ENCODE measurements at regions of chr17 and their contacts with region 1.

Region 1: GRCh38 chr17:49180303-49180702 is 30.1 kb downstream of the GNGT2 start:
- DNase-seq: peak; percentile 56 to 78 (median 74)
- H3K4me3 ChIP-seq: no peak overlapping the region
- H3K4me3 Mint-ChIP-seq: no peak overlapping the region
- H3K27ac ChIP-seq: no peak overlapping the region
- H3K27ac Mint-ChIP-seq: peak overlapping the region in 1 of 7 donors; percentile 66
- H3K4me1 ChIP-seq: peaks cover 0 to 3% of the 10 kb centered on the region in 2 donors
- H3K4me1 Mint-ChIP-seq: peaks cover 2% of the 10 kb centered on the region
- H3K27me3 ChIP-seq: no peaks in the 10 kb centered on the region
- H3K27me3 Mint-ChIP-seq: peaks cover 10 to 11% (median 10%) of the 10 kb centered on the region in 3 donors
- CTCF ChIP-seq: peak; percentile 91

Region 2: GRCh38 chr17:49117587-49118230 is 62.6 kb before region 1 on chr17:
- intact Hi-C with region 1: no loop called
- DNase-seq: no peak
- H3K4me3 ChIP-seq: no peak overlapping the region
- H3K4me3 Mint-ChIP-seq: no peak overlapping the region
- H3K27ac ChIP-seq: no peak overlapping the region
- H3K27ac Mint-ChIP-seq: no peak overlapping the region
- H3K4me1 ChIP-seq: no peaks in the 10 kb centered on the region
- H3K4me1 Mint-ChIP-seq: no peaks in the 10 kb centered on the region
- H3K27me3 ChIP-seq: peaks cover 24 to 26% of the 10 kb centered on the region in 2 donors
- H3K27me3 Mint-ChIP-seq: peaks cover 16 to 41% (median 21%) of the 10 kb centered on the region in 3 donors
- CTCF ChIP-seq: no peak

Region 3: DNA sequence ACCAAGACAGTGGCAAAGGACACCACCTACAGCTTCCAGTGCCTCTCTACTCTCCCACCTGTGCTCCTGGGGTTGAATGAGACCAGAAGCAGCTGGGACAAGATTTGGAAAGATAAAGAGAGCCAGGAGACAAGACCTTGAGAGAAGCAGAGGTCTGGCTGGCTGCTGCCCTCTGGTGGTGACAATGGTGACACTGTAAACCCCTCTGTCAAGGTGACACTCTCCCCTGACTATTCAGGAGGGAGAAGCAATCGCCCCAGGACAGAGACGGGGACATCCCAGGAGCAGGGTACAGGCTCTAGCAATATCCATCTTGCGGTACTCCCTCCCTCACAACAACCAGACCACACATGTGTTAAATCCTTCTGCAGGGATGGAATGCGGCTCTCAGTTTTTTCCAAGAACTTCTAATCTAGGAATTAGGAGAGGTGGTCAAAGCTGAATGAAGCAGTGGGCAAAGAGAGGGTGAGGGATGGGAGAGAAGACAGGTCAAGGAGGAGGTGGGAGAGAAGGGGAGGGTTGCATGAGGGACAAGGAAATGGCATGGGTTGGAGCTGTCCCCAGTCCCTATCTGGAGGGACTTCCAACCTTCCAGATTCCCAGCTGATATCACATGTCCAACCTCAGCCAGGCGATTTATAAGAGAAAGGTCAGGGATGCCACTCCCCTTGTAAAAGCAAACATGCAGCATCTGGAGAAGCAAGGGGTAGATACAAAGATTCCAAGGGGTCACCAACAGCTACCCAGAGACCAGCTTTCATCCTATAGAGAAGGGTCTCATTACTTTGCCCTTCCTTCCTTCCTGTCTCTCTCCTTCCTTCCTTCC is 47.3 kb after region 1 on chr17:
- intact Hi-C with region 1: loop called (anchors 1 to 2 kb)
- DNase-seq: peak; percentile 59 to 82 (median 74)
- H3K4me3 ChIP-seq: no peak overlapping the region
- H3K4me3 Mint-ChIP-seq: peak overlapping the region in 1 of 2 donors; percentile 60
- H3K27ac ChIP-seq: no peak overlapping the region
- H3K27ac Mint-ChIP-seq: peak overlapping the region in 2 of 7 donors; percentile 39 to 46
- H3K4me1 ChIP-seq: peaks cover 44 to 58% of the 10 kb centered on the region in 2 donors
- H3K4me1 Mint-ChIP-seq: peaks cover 55% of the 10 kb centered on the region
- H3K27me3 ChIP-seq: peaks cover 21 to 64% of the 10 kb centered on the region in 2 donors
- H3K27me3 Mint-ChIP-seq: peaks cover 56 to 85% (median 71%) of the 10 kb centered on the region in 3 donors
- CTCF ChIP-seq: peak; percentile 88

Region 4: DNA sequence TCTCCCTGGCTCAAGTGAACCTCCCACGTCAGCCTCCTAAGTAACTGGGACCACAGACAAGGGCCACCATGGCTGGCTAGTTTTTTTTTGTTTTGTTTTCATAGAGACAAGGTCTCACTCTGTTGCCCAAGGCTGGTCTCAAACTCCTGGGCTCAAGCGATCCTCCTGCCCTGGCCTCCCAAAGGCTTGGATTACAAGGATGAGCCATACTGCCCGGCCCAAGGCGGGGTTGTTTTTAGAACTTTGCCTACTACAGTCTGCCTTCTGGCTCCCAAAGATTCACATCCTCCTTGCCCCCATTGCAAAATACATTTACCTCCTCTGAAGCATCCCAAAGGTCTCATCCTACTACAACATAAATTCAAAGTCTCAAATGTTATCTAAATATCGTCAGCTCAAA is 99.8 kb after region 1 on chr17:
- intact Hi-C with region 1: loop called in 1 of 2 experiments (anchors 10 kb)
- DNase-seq: no peak
- H3K4me3 ChIP-seq: no peak overlapping the region
- H3K4me3 Mint-ChIP-seq: no peak overlapping the region
- H3K27ac ChIP-seq: no peak overlapping the region
- H3K27ac Mint-ChIP-seq: no peak overlapping the region
- H3K4me1 ChIP-seq: peaks cover 11 to 18% of the 10 kb centered on the region in 2 donors
- H3K4me1 Mint-ChIP-seq: peaks cover 17% of the 10 kb centered on the region
- H3K27me3 ChIP-seq: no peaks in the 10 kb centered on the region
- H3K27me3 Mint-ChIP-seq: peaks cover 10 to 12% (median 10%) of the 10 kb centered on the region in 3 donors
- CTCF ChIP-seq: no peak

Region 5: DNA sequence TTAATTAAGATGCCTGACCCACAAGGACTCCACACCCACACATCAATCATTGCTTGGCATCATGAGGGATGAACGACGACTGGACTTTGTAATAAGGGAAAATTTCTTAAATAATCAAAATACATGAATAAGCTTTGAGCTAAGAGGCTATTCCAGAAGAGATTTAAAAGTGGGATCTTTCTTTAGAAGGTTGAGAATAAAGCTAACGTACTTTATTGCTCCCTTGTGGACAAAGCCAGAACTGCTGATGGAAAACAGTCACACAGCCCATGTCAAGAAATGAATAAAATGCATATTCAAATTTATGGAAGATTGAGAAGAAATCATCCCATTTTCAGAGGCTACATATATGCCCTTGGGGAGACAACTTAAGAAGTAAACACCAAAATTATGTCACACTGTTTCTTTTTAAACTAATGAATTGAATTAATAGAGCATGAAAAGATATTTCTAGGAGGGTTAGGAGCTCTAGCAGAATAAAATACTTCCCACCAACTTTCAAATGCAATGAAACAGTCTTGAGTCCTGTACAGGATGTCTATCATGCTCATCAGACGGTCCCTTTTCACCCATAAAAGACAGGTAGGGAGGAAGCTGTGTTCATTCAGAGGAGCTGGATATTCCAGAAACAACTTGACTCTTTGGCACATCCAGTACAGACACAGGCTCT is 110.5 kb after region 1 on chr17:
- intact Hi-C with region 1: loop called (anchors 1 to 10 kb)
- DNase-seq: peak; percentile 5 to 32 (median 15)
- H3K4me3 ChIP-seq: no peak overlapping the region
- H3K4me3 Mint-ChIP-seq: no peak overlapping the region
- H3K27ac ChIP-seq: no peak overlapping the region
- H3K27ac Mint-ChIP-seq: no peak overlapping the region
- H3K4me1 ChIP-seq: no peaks in the 10 kb centered on the region
- H3K4me1 Mint-ChIP-seq: peaks cover 2% of the 10 kb centered on the region
- H3K27me3 ChIP-seq: no peaks in the 10 kb centered on the region
- H3K27me3 Mint-ChIP-seq: peaks cover 0 to under 1% (median 0%) of the 10 kb centered on the region in 3 donors
- CTCF ChIP-seq: peak; percentile 74

Region 6: GRCh38 chr17:49390548-49391324 is 210.4 kb after region 1 on chr17:
- intact Hi-C with region 1: loop called in 1 of 2 experiments (anchors 5 kb)
- DNase-seq: peak; percentile 75 to 90 (median 86)
- H3K4me3 ChIP-seq: peak overlapping the region; percentile 37 to 72 (median 61)
- H3K4me3 Mint-ChIP-seq: peak overlapping the region; percentile 91 to 96
- H3K27ac ChIP-seq: peak overlapping the region; percentile 89 to 97
- H3K27ac Mint-ChIP-seq: peak overlapping the region; percentile 93 to 99 (median 99)
- H3K4me1 ChIP-seq: peaks cover 75 to 78% of the 10 kb centered on the region in 2 donors
- H3K4me1 Mint-ChIP-seq: peaks cover 73% of the 10 kb centered on the region
- H3K27me3 ChIP-seq: no peaks in the 10 kb centered on the region
- H3K27me3 Mint-ChIP-seq: peaks cover 0 to 2% (median 1%) of the 10 kb centered on the region in 3 donors
- CTCF ChIP-seq: no peak

Region 7: GRCh38 chr17:49422714-49423113 is 242.4 kb after region 1 on chr17:
- intact Hi-C with region 1: no loop called
- DNase-seq: no peak
- H3K4me3 ChIP-seq: no peak overlapping the region
- H3K4me3 Mint-ChIP-seq: no peak overlapping the region
- H3K27ac ChIP-seq: no peak overlapping the region
- H3K27ac Mint-ChIP-seq: no peak overlapping the region
- H3K4me1 ChIP-seq: no peaks in the 10 kb centered on the region
- H3K4me1 Mint-ChIP-seq: peaks cover 1% of the 10 kb centered on the region
- H3K27me3 ChIP-seq: peaks cover 0 to 4% of the 10 kb centered on the region in 2 donors
- H3K27me3 Mint-ChIP-seq: peaks cover 2 to 16% (median 10%) of the 10 kb centered on the region in 3 donors
- CTCF ChIP-seq: no peak

Measured in CD14-positive monocyte (primary cell).